HEK293 (cell line): ENCODE measurements at regions of chr18 and their contacts with region 1.

Region 1: GRCh38 chr18:22983175-22983574 is 50.0 kb downstream of the RBBP8 start:
- H3K4me3 ChIP-seq: no peak overlapping the region
- H3K27ac ChIP-seq: no peak overlapping the region
- H3K4me1 ChIP-seq: no peaks in the 10 kb centered on the region
- CTCF ChIP-seq: 0 out of 2 replicates have a peak, but pooled peaks have one; percentile 7

Region 2: GRCh38 chr18:22800551-22800951 is 182.6 kb before region 1 on chr18:
- CTCF ChIA-PET with region 1: interaction called, 26 read pairs
- POLR2A ChIA-PET with region 1: no interaction called
- H3K4me3 ChIP-seq: no peak overlapping the region
- H3K27ac ChIP-seq: no peak overlapping the region
- H3K4me1 ChIP-seq: 0 out of 2 replicates have a peak, but pooled peaks cover 4% of the 10 kb centered on the region
- CTCF ChIP-seq: no peak

Region 3: GRCh38 chr18:22964116-22964515 is 19.1 kb before region 1 on chr18:
- CTCF ChIA-PET with region 1: interaction called, 10 read pairs
- POLR2A ChIA-PET with region 1: no interaction called
- H3K4me3 ChIP-seq: no peak overlapping the region
- H3K27ac ChIP-seq: no peak overlapping the region
- H3K4me1 ChIP-seq: no peaks in the 10 kb centered on the region
- CTCF ChIP-seq: no peak

Region 4: DNA sequence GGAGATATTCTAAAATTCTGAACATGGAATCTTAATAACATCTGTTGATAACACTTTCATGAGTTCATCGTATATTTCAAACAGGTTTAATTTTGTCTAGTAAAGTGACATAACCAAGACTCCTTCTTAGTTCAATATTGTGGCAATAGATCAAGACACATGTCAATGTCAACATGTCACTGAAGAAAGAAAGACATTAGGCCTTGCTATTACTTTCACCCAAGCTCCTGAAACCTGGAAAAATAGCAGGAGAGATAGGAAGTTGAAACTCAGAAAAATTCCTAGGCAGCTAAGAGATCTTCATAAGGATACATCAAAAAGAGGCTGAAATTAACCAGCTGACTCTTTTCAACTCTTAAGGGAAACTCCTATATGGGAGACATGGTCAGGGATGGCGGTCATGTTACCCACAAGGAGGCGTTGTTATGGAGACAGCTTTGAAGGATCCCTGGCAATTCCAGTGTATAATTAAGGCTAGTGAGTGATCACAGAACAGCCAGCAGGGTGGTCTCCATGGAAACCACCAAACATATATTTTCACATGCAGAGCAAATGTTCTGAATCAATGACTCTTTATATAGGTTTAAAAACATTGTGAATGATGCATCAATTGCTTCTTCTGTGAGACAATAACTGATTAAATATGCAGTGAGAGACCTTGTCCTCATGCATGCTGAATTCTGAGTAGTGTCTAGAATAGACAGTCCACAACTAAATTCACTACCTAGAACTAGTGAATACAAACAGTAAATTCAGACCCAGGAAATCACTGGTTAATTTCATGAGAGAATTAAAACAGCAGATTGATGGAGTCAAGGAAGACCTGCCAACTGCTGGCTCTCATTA is 354.6 kb after region 1 on chr18:
- CTCF ChIA-PET with region 1: no interaction called
- POLR2A ChIA-PET with region 1: no interaction called
- H3K4me3 ChIP-seq: no peak overlapping the region
- H3K27ac ChIP-seq: no peak overlapping the region
- H3K4me1 ChIP-seq: no peaks in the 10 kb centered on the region
- CTCF ChIP-seq: no peak